ENCODE measurements at regions of chr14 and their contacts with region 1.

Region 1: DNA sequence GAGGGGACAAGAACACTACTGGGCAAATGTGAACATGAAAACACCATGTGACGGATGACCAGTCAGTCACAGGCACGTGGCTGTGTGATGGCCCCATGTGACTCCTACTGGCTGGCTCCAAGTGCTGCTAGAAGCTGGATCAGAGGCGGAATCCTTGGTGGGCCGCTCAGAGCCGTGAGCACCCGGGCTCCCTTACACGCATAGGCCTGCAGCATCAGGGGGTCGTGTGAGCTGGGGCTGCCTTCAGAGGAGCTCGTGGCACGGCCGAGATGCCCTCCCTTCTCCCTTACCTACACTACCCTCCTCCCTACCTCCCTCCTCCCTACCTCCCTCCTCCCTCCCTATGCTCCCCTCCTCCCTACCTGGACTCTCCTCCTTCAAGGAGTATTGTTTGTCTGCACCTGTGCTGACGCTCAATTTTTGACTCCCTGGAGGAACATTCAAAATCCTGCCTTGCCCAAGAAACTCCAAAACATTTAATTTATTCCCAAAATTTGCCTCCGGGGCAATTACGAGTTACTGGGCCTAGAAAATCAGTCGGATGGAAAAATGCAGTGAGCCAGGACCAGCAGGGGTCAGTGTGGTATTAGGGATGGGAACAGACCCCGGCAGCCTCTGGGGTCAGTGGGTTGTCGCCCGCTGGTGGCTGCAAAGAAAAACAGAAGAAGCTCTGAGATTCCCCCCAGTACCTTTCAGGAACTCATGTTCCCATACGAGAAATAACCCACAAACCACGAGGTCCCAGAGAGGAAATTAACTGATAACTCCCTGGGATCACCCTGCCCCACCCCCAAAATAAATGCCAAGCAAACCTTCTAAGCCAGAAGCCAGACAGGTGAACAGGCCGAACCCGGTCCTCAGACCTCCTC is 61.2 kb downstream of the C14orf132 start:
- DNase-seq: peak; percentile 37 to 83 (median 59)
- ATAC-seq: peak; percentile 56 to 83 (median 61)
- H3K4me3 ChIP-seq: no peak overlapping the region
- H3K4me3 Mint-ChIP-seq: no peak overlapping the region
- H3K27ac ChIP-seq: no peak overlapping the region
- H3K27ac Mint-ChIP-seq: no peak overlapping the region
- H3K4me1 ChIP-seq: peaks cover 0 to 4% of the 10 kb centered on the region in 2 experiments
- H3K4me1 Mint-ChIP-seq: peaks cover 0 to 5% (median 4%) of the 10 kb centered on the region in 3 donors
- H3K27me3 ChIP-seq: peaks cover 0 to 17% of the 10 kb centered on the region in 2 experiments
- H3K27me3 Mint-ChIP-seq: peaks cover 2 to 3% of the 10 kb centered on the region in 2 donors

Region 2: GRCh38 chr14:96149131-96149530 is 48.7 kb after region 1 on chr14:
- CTCF ChIA-PET with region 1: no interaction called
- POLR2A ChIA-PET with region 1: no interaction called
- DNase-seq: no peak
- ATAC-seq: no peak
- H3K4me3 ChIP-seq: no peak overlapping the region
- H3K4me3 Mint-ChIP-seq: no peak overlapping the region
- H3K27ac ChIP-seq: no peak overlapping the region
- H3K27ac Mint-ChIP-seq: no peak overlapping the region
- H3K4me1 ChIP-seq: no peaks in the 10 kb centered on the region
- H3K4me1 Mint-ChIP-seq: no peaks in the 10 kb centered on the region
- H3K27me3 ChIP-seq: peaks cover 3 to 13% of the 10 kb centered on the region in 2 experiments
- H3K27me3 Mint-ChIP-seq: peaks cover 0 to 8% of the 10 kb centered on the region in 2 donors

Region 3: DNA sequence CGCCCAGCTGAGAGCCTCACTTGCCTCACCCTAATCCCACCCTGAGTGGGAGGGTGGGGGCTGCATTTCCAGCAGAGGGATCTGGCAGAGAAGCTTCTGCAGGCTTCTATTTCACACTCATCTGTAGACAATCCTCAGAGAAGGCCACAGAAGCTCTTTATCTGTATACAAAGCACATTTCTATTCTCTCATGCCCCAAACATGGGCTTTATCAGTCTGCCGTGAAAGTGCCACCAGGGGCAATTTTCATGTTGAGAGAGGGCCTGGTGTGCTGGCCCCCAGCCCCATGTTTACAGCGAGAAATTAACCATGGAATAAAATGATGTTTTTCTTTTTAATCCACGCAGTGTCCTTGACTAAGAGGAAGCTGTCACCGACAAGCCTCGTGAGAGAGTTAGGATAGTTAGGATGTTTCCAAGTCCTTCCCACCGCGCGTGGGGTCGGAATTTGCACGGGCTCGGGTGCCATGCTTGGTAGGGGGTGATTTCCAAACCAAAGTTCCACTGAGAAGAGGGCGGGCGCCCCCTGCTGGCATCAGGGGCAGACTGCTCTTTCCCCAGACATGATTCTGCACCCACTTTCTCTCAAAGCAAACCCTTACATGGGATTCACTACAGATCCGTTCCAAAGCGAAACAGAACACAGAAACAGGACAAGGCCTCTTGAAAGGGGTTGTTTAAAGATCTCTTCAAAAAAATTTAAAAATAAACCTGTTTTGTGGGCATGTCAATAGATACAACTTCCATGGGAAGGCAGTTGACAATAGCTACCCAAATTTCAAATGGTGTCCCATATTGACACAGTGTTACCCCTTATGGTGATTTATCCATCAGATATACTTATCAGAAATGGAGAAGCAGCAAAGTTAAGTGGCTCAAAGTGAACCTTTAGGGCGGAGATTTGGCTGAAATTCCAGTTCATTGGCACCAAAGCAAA is 175.1 kb after region 1 on chr14:
- CTCF ChIA-PET with region 1: interaction called, 12 to 13 read pairs
- POLR2A ChIA-PET with region 1: no interaction called
- DNase-seq: peak; percentile 23 to 79 (median 57)
- ATAC-seq: peak in 2 of 4 experiments; percentile 26 to 57
- H3K4me3 ChIP-seq: no peak overlapping the region
- H3K4me3 Mint-ChIP-seq: no peak overlapping the region
- H3K27ac ChIP-seq: no peak overlapping the region
- H3K27ac Mint-ChIP-seq: no peak overlapping the region
- H3K4me1 ChIP-seq: peaks cover 0 to 3% of the 10 kb centered on the region in 2 experiments
- H3K4me1 Mint-ChIP-seq: peaks cover 3 to 6% (median 4%) of the 10 kb centered on the region in 3 donors
- H3K27me3 ChIP-seq: no peaks in the 10 kb centered on the region
- H3K27me3 Mint-ChIP-seq: no peaks in the 10 kb centered on the region